OCI-LY7 (cell line): ENCODE measurements at regions of chr13 and their contacts with region 1.

Region 1: GRCh38 chr13:36420437-36420891 is 11.8 kb upstream of the CCNA1 start:
- DNase-seq: peak; percentile 71
- H3K4me3 ChIP-seq: no peak overlapping the region
- H3K27ac ChIP-seq: no peak overlapping the region
- H3K4me1 ChIP-seq: no peaks in the 10 kb centered on the region
- CTCF ChIP-seq: peak; percentile 91

Region 2: DNA sequence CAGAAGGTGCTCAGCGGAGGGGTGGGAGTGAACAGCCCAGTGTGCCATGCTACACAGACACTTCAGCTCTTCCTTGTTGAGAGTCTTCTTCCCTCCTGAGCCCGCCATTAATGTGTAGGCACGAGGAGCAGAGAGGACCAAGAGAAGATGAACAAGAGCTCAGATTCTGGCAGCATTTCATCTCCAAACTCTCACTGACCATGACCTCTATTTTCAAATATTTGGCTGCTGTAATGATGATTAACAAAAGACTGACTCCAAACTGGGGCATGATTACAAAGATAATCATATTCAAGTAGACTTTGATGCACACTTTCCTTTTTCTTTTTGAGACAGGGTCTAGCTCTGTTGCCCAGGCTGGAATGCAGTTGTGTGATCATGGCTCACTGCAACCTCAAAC is 525.8 kb before region 1 on chr13:
- CTCF ChIA-PET with region 1: no interaction called
- POLR2A ChIA-PET with region 1: no interaction called
- intact Hi-C with region 1: no loop called
- DNase-seq: no peak
- H3K4me3 ChIP-seq: no peak overlapping the region
- H3K27ac ChIP-seq: no peak overlapping the region
- H3K4me1 ChIP-seq: no peaks in the 10 kb centered on the region
- CTCF ChIP-seq: no peak

Region 3: GRCh38 chr13:36736119-36736726 is 315.8 kb after region 1 on chr13:
- CTCF ChIA-PET with region 1: no interaction called
- POLR2A ChIA-PET with region 1: no interaction called
- intact Hi-C with region 1: loop called (anchors 10 kb)
- DNase-seq: peak; percentile 54
- H3K4me3 ChIP-seq: no peak overlapping the region
- H3K27ac ChIP-seq: no peak overlapping the region
- H3K4me1 ChIP-seq: no peaks in the 10 kb centered on the region
- CTCF ChIP-seq: peak; percentile 91

Region 4: GRCh38 chr13:36981156-36981743 is 560.8 kb after region 1 on chr13:
- CTCF ChIA-PET with region 1: no interaction called
- POLR2A ChIA-PET with region 1: no interaction called
- intact Hi-C with region 1: loop called (anchors 10 kb)
- DNase-seq: peak; percentile 76
- H3K4me3 ChIP-seq: no peak overlapping the region
- H3K27ac ChIP-seq: peak overlapping the region; percentile 31
- H3K4me1 ChIP-seq: peaks cover 17% of the 10 kb centered on the region
- CTCF ChIP-seq: peak; percentile 92